Left ventricle myocardium inferior (tissue), 1 donor: ENCODE measurements at regions of chr16 and their contacts with region 1.

Region 1: GRCh38 chr16:66728117-66728787 is 23.2 kb downstream of the DYNC1LI2 start:
- DNase-seq: no peak
- H3K4me3 ChIP-seq: no peak overlapping the region
- H3K27ac ChIP-seq: peak overlapping the region; percentile 0
- H3K4me1 ChIP-seq: peaks cover 11% of the 10 kb centered on the region
- H3K27me3 ChIP-seq: no peaks in the 10 kb centered on the region
- CTCF ChIP-seq: peak; percentile 80

Region 2: DNA sequence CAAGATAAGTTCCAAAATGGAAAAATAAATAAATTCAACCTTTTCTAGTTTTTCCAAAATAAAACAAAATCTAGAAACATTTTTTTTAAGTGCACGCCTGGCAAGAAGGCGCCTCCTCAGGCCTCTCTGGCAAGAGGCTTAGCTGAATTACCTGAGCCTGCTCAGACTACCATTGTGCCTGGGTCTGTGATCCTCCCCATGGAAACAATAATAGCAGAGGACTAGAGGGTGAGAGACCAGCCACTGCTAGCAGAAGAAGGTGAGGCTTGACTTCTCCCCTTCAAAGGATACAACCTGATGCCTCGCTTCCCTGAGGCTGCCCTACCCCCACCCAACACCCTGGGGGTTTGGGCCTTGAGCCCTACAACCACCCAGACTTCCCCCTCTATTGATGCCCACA is 58.3 kb after region 1 on chr16:
- intact Hi-C with region 1: no loop called
- DNase-seq: no peak
- H3K4me3 ChIP-seq: no peak overlapping the region
- H3K27ac ChIP-seq: no peak overlapping the region
- H3K4me1 ChIP-seq: no peaks in the 10 kb centered on the region
- H3K27me3 ChIP-seq: no peaks in the 10 kb centered on the region
- CTCF ChIP-seq: no peak

Region 3: GRCh38 chr16:66810391-66810790 is 82.1 kb after region 1 on chr16:
- intact Hi-C with region 1: no loop called
- DNase-seq: no peak
- H3K4me3 ChIP-seq: no peak overlapping the region
- H3K27ac ChIP-seq: no peak overlapping the region
- H3K4me1 ChIP-seq: no peaks in the 10 kb centered on the region
- H3K27me3 ChIP-seq: no peaks in the 10 kb centered on the region
- CTCF ChIP-seq: no peak

Region 4: GRCh38 chr16:66859397-66860068 is 131.3 kb after region 1 on chr16:
- intact Hi-C with region 1: loop called (anchors 10 kb)
- DNase-seq: no peak
- H3K4me3 ChIP-seq: no peak overlapping the region
- H3K27ac ChIP-seq: peak overlapping the region; percentile 8
- H3K4me1 ChIP-seq: peaks cover 12% of the 10 kb centered on the region
- H3K27me3 ChIP-seq: no peaks in the 10 kb centered on the region
- CTCF ChIP-seq: no peak